A549 (cell line): ENCODE measurements at regions of chr3 and their contacts with region 1.

Region 1: GRCh38 chr3:187150599-187150998 is 11.3 kb upstream of the RPL39L start:
- DNase-seq: no peak
- ATAC-seq: no peak
- H3K4me3 ChIP-seq: no peak overlapping the region
- H3K27ac ChIP-seq: no peak overlapping the region
- H3K4me1 ChIP-seq: no peaks in the 10 kb centered on the region
- CTCF ChIP-seq: no peak
- EP300 ChIP-seq: no peak
- POLR2A ChIP-seq: no peak
- RAD21 ChIP-seq: no peak

Region 2: DNA sequence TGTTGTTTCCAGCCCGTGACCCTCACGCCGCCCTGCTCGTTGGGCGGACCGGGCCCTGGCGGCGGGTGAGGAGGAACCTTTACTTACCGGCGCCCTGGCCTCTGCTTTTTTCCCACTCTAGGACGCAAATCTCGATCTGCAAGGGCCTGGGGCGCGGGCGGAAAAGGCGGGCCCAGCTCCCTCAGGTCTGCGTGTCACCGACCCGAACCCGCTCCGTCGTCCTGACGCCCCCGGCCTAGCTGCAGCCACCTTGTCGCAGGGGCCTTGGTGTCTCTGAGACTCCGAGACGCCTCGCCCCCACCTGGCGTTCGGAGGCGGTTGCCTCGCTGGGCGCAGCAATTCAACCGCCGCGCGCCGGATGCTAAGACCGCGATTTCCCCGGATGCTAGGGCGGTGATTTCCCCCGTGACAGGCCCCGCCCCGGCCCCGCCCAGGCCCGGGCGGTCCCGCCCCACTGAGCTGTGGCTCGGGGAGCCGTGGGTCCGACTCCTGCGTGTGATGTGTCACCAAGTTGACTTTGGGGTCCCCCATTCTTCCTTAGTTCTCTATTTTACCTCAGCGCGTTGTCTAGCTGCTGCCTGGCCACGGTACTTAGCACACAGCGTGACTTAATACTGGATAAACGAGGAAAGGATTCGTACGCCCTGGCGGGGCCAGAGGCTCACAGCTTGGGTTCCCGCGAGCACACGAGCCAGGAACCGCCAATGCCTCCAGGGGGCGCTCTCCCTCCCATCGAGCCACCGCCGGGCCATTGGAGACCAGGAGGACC is 11.3 kb before region 1 on chr3 and contains the start of gene RPL39L:
- CTCF ChIA-PET with region 1: interaction called, 36 read pairs
- POLR2A ChIA-PET with region 1: no interaction called
- DNase-seq: peak; percentile 86 to 87
- ATAC-seq: peak; percentile 99
- H3K4me3 ChIP-seq: peak within 1 kb of the TSS; percentile 68
- H3K27ac ChIP-seq: peak within 1 kb of the TSS; percentile 76 to 93
- H3K4me1 ChIP-seq: no peaks in the 10 kb centered on the region
- CTCF ChIP-seq: peak; percentile 82
- EP300 ChIP-seq: no peak
- POLR2A ChIP-seq: peak; percentile 76
- RAD21 ChIP-seq: peak in 1 of 2 experiments; percentile 44; a peak in 4 of 5 replicates
- polyA plus RNA-seq, gene RPL39L: 54.2 and 55.8 TPM in 2 replicates

Region 3: GRCh38 chr3:187172929-187173328 is 22.3 kb after region 1 on chr3:
- CTCF ChIA-PET with region 1: no interaction called
- POLR2A ChIA-PET with region 1: no interaction called
- DNase-seq: no peak
- ATAC-seq: no peak
- H3K4me3 ChIP-seq: no peak overlapping the region
- H3K27ac ChIP-seq: no peak overlapping the region
- H3K4me1 ChIP-seq: no peaks in the 10 kb centered on the region
- CTCF ChIP-seq: no peak
- EP300 ChIP-seq: no peak
- POLR2A ChIP-seq: no peak
- RAD21 ChIP-seq: no peak

Region 4: GRCh38 chr3:187186801-187187421 is 36.3 kb after region 1 on chr3:
- CTCF ChIA-PET with region 1: no interaction called
- POLR2A ChIA-PET with region 1: no interaction called
- DNase-seq: peak in 1 of 2 experiments; percentile 22
- ATAC-seq: peak in 1 of 2 experiments; percentile 68; a peak in 2 of 6 replicates
- H3K4me3 ChIP-seq: no peak overlapping the region
- H3K27ac ChIP-seq: no peak overlapping the region
- H3K4me1 ChIP-seq: no peaks in the 10 kb centered on the region
- CTCF ChIP-seq: no peak
- EP300 ChIP-seq: no peak
- POLR2A ChIP-seq: no peak
- RAD21 ChIP-seq: no peak